ENCODE measurements at regions of chr4 and their contacts with region 1.

Region 1: DNA sequence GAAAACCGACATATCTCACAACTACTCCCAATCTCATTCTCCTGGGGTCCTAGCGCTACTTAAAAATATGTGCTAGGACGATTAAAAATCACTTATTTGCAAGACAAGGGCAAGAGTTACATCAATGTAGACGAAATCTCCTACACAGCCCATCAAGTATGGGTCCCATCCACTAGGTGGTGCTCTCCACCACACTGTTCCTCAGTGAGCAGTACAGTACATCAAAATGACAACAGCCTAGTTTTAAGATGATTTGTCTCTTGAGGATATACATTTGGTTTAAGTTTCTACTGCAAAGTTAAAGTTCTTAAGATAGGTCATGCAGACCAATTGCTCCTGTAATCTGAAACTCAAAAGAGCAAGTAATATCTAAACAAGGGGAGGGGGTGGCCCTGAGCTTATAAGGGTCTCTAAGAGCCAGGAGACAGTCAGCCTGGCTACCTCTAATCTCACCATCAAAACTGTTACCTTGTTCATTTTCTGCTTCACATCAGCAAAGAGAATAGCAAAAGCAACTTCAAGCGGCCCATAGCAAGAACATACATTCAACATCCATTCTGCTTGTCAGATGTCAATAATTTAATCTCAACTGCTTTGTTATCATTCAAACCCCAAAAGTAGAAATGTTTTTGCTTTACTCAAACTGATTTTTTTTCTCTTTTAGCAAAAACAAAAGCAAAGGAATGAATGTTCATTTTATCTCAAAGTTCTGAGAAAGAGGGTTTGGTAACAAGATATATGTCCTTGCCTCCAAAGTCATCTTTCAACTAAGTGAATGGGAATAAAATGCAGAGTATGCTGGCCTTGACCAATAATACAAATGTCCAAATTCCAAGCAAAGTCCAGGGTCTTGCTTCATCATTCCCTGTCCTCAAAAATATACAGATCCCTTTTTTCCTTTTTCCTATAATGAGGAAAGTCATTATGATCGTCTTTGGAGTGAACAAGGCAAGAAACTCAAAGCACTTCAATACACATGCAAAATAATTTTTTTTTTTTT is 53.1 kb downstream of the STX18 start:
- DNase-seq: peak; percentile 32 to 94 (median 74)

Region 2: GRCh38 chr4:4386736-4387392 is 101.8 kb before region 1 on chr4 and contains the start of gene NSG1:
- intact Hi-C with region 1: no loop called
- DNase-seq: peak in 9 of 10 donors; percentile 42 to 96 (median 72)

Region 3: GRCh38 chr4:5812506-5813229 is 1324.0 kb after region 1 on chr4:
- intact Hi-C with region 1: loop called (anchors 10 kb)
- DNase-seq: peak in 1 of 10 donors; percentile 17

Measured in posterior cingulate gyrus (tissue), 11 donors.